Activated CD4-positive, alpha-beta T cell treated with anti-CD3 and anti-CD28 coated beads for 36 hours (primary cell): ENCODE measurements at regions of chr6 and their contacts with region 1.

Region 1: DNA sequence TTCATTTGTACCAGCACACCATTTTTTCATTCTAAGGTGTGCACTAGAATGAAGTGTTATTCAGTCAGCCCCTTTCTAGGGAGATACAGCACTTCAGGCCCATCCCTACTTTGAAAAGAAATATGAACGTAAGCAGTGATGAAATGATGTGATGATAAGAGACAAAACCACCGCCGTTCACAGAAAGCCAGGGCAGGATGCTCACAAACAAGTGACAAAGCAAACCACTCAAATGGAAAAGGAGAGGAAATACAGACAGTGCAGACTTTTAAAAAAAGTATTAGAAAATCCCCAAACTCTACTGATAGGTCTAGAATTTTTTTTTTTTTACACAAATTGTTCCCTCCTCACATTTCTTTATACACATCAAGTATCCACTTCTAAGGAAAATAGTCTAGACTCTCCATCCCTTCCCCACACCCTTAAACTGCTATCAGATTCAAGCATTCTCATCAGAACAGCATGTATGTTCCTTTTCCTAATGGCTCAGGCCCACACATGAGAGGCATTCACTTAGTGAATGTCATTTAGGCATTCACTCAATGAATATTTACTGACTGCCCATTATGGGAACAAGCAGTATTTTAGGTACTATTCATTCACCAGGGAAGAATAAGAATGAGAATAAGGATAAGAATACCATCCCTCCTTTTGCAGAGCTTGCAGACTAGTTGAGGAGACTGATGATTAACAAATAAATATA is 243.5 kb downstream of the GMPR start:
- DNase-seq: peak; percentile 74
- ATAC-seq: peak; percentile 85
- H3K4me3 Mint-ChIP-seq: peak overlapping the region; percentile 10
- H3K27ac Mint-ChIP-seq: peak overlapping the region; percentile 92
- H3K4me1 Mint-ChIP-seq: peaks cover 81% of the 10 kb centered on the region
- H3K27me3 Mint-ChIP-seq: no peaks in the 10 kb centered on the region

Region 2: GRCh38 chr6:16438718-16439591 is 42.9 kb before region 1 on chr6:
- CTCF ChIA-PET with region 1: no interaction called
- POLR2A ChIA-PET with region 1: no interaction called
- intact Hi-C with region 1: loop called in 1 of 2 experiments (anchors 2 kb)
- DNase-seq: peak; percentile 33
- ATAC-seq: no peak
- H3K4me3 Mint-ChIP-seq: peak overlapping the region; percentile 74
- H3K27ac Mint-ChIP-seq: peak overlapping the region; percentile 67
- H3K4me1 Mint-ChIP-seq: peaks cover 67% of the 10 kb centered on the region
- H3K27me3 Mint-ChIP-seq: no peaks in the 10 kb centered on the region